ENCODE measurements at regions of chr13 and their contacts with region 1.

Region 1: DNA sequence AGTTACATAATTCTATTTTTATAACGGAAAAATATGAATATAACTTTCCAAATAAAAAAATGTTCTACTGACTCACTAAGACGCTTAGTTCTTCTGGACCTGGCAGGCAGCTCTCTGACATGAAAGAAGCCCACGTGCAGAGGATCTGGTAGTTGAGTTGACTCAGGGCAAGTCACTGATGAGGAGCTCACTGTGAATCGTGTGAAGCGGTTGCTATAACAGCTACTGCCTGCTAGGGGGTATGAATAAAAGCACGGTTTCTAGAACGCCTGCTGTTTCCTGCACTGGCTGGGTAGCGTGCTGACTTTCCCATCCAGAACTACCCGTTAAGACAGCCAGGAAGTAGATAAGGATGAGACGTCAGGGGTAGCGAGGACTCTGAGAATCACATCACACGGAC is 54.7 kb upstream of the WASF3 start:
- DNase-seq: peak; percentile 73
- H3K4me3 Mint-ChIP-seq: no peak overlapping the region
- H3K27ac Mint-ChIP-seq: peak overlapping the region; percentile 63
- H3K4me1 Mint-ChIP-seq: peaks cover 26% of the 10 kb centered on the region
- H3K27me3 Mint-ChIP-seq: no peaks in the 10 kb centered on the region

Region 2: DNA sequence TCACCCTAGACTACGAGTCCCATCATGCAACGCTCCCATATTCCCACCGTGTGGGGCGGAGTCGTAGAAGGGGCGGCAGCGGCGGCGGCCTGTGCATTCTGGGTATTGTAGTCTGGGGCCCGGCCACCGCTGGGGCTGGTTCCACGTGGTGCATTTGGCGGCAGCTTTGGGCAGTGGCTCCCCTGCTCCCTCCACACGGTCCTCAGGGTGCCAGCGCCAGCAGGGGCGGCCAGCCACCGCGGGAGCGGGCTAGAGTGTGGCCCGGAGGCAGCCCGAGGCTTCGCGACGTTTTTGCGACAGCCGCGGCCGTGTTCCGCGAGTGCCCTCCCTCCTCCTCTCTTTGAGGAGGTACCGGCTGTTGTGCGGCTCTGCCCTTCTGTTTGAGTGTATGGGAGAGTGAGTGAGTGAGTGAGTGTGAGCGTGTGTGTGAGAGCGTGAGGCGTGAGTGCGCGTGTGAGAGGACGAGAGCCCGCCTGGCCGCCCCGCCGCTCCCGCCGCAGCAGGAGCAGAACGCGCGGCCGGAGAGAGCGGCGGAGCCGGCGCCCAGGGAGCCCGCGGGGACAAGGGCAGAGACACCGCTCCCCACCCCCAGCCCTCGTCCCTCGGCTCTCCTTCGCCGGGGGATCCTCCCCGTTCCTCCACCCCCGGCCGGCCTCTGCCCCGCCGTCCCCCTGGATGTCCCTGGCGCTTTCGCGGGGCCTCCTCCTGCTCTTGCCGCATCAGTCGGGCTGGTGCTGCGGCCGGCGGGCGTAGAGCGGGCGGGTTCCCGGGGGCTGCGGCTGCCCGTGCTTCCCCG is 248.8 kb before region 1 on chr13 and contains the start of gene CDK8:
- CTCF ChIA-PET with region 1: no interaction called
- intact Hi-C with region 1: loop called (anchors 2 kb)
- DNase-seq: peak; percentile 89
- H3K4me3 Mint-ChIP-seq: peak within 1 kb of the TSS; percentile 87
- H3K27ac Mint-ChIP-seq: peak within 1 kb of the TSS; percentile 54
- H3K4me1 Mint-ChIP-seq: peaks cover 36% of the 10 kb centered on the region
- H3K27me3 Mint-ChIP-seq: no peaks in the 10 kb centered on the region
- total RNA-seq, gene CDK8: 15.4 to 15.9 TPM